ENCODE measurements at regions of chr3 and their contacts with region 1.

Region 1: GRCh38 chr3:138068579-138069174 is 46.7 kb downstream of the DZIP1L start:
- H3K4me3 Mint-ChIP-seq: no peak overlapping the region
- H3K27ac Mint-ChIP-seq: no peak overlapping the region
- H3K4me1 Mint-ChIP-seq: peaks cover 10% of the 10 kb centered on the region
- H3K27me3 Mint-ChIP-seq: no peaks in the 10 kb centered on the region

Region 2: DNA sequence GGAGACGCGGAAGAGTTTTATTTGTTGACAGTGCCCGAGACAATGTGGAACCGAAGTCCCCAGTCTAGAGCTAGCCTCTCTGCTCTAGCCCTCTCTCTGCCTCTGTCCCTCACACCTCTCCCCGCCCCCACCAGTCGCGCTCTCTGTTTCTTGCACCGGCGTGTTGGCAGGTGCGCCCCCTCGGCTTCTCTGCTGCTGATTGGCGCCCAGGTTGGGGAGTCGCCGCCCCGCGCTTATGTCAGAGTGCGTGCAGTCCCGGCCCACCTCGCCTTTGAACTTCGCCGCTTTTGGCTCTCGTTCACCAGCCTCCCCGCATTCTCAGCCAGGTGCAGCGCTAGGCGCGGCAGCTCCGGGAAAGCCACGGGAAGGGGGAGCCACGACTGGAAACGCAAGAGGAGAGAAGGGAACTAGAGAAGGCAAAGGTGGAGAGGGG is 304.7 kb before region 1 on chr3 and contains the start of gene SOX14:
- intact Hi-C with region 1: no loop called
- H3K4me3 Mint-ChIP-seq: no peak within 1 kb of the TSS
- H3K27ac Mint-ChIP-seq: no peak within 1 kb of the TSS
- H3K4me1 Mint-ChIP-seq: peaks cover 12% of the 10 kb centered on the region
- H3K27me3 Mint-ChIP-seq: peaks cover 96% of the 10 kb centered on the region

Region 3: GRCh38 chr3:138148503-138148902 is 79.8 kb after region 1 on chr3:
- intact Hi-C with region 1: loop called (anchors 2 kb)
- H3K4me3 Mint-ChIP-seq: no peak overlapping the region
- H3K27ac Mint-ChIP-seq: no peak overlapping the region
- H3K4me1 Mint-ChIP-seq: peaks cover 5% of the 10 kb centered on the region
- H3K27me3 Mint-ChIP-seq: no peaks in the 10 kb centered on the region

Region 4: DNA sequence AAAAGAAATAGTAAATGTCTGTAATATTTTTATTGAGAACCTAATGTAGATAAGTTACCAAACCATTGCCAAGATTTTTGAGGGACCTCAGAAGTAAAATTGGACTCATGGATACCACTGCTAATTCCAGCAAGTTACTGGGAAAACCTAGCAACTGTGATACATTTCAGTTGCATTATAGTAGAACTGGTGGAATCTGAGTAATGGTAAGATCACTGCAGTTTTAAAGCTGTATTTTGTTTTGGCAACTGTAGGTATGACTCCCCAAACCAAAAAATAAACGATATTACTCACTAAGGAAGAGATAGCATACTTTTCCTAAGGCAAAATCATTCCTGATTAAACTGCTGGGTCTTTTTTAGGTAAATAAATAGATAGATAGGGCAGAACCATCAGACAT is 172.4 kb after region 1 on chr3:
- intact Hi-C with region 1: loop called (anchors 10 kb)
- H3K4me3 Mint-ChIP-seq: no peak overlapping the region
- H3K27ac Mint-ChIP-seq: no peak overlapping the region
- H3K4me1 Mint-ChIP-seq: no peaks in the 10 kb centered on the region
- H3K27me3 Mint-ChIP-seq: no peaks in the 10 kb centered on the region

Region 5: DNA sequence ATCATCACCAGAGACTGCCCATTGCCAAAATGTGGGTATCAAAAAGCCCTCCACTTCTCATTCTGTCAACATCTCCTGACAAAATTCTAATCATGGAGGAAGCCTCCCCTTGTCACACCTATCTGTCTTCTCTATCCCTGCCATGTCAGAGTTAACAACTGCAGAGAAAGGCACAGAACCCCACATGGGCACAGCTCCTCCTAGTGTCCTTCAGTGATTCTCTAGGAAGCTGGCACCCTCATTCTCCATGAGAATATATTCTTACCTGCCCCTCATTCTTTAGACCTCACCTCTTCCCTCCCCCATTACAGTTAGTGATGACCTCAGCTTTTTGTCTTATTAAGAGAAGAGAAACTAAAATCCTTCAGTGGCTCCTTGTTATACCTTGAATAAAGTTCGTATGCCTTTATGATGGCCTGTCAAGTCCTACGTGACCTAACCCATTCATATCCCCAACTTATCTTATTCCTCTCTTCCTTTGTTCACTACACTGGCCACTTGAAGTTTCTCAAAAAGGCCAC is 216.3 kb after region 1 on chr3:
- intact Hi-C with region 1: loop called (anchors 5 kb)
- H3K4me3 Mint-ChIP-seq: no peak overlapping the region
- H3K27ac Mint-ChIP-seq: no peak overlapping the region
- H3K4me1 Mint-ChIP-seq: no peaks in the 10 kb centered on the region
- H3K27me3 Mint-ChIP-seq: no peaks in the 10 kb centered on the region

Region 6: DNA sequence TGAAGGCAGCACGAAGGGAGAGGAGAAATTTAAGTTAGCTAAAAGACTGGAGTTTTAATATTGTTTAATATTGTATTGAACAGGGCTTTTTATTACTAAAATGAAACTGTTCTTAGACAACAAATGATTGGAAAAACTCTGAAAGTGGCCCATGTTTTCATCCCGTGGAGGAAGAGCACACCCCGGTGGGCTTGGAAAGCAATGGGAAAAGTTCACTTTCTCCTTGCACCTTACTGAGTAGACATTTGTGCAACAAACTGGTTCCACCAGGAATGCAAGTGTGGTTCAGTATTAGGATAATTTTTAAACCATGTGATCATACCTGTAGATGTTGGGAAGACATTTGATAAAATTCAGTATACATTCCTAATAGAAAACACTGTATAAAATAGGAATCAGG is 357.5 kb after region 1 on chr3:
- intact Hi-C with region 1: loop called (anchors 2 kb)
- H3K4me3 Mint-ChIP-seq: no peak overlapping the region
- H3K27ac Mint-ChIP-seq: no peak overlapping the region
- H3K4me1 Mint-ChIP-seq: no peaks in the 10 kb centered on the region
- H3K27me3 Mint-ChIP-seq: peaks cover 19% of the 10 kb centered on the region

Measured in dendritic cell treated with granulocyte-macrophage colony-stimulating factor and Interleukin-4, amounts not matched to agents 40 ng/mL and 50 ng/mL, for 4 days (primary cell).